A549 (cell line): ENCODE measurements at regions of chr12 and their contacts with region 1.

Region 1: GRCh38 chr12:51980051-51980808 is 26.5 kb upstream of the TAMALIN start:
- DNase-seq: peak; percentile 68 to 92
- ATAC-seq: peak; percentile 81 to 92
- H3K4me3 ChIP-seq: no peak overlapping the region
- H3K27ac ChIP-seq: no peak overlapping the region
- H3K4me1 ChIP-seq: peaks cover 25% of the 10 kb centered on the region
- CTCF ChIP-seq: peak; percentile 97
- EP300 ChIP-seq: no peak
- POLR2A ChIP-seq: no peak
- RAD21 ChIP-seq: peak; percentile 85 to 90

Region 2: DNA sequence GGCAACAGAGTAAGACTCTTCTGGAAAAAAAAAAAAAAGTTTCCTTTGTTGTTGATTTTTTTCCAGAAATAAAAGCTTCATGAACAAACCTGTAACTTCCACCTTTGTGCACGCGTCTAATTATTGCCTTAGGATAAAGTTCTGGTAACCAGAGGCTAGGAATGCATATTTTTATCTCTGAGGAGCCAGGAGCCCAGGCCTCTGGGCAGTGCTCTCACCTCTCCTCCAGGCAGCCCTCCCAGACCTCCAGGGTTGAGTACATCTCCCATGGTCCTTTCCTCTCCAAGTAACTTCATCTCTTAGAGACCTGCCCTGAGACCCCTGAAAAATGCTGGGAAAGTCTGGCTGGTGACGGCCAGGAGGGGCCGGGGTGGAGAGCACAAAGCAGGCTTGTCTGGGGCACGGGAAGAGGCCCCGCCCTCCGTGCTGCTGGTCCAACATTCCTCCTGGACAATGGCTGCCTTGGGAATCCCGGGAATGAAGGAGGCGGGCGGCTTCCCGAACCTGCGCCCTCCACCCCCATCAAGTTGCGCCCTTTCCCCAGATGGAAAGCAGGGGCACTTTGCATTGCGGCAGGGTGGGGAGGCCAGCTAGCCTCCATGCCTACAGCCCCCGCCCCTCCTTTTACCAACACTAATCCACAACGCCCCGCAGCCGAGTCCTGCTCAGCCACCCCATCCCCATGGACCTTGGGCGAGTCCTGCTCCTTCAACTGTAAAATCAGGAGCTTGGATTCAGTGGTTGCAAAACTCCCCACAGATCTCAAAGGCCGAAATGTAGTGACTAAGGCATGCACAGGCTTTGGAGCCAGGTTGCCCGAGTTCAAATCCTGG is 124.4 kb before region 1 on chr12:
- CTCF ChIA-PET with region 1: no interaction called
- POLR2A ChIA-PET with region 1: no interaction called
- DNase-seq: peak in 1 of 2 experiments; percentile 28
- ATAC-seq: peak; percentile 26 to 71; a peak in 4 of 6 replicates
- H3K4me3 ChIP-seq: no peak overlapping the region
- H3K27ac ChIP-seq: no peak overlapping the region
- H3K4me1 ChIP-seq: no peaks in the 10 kb centered on the region
- CTCF ChIP-seq: no peak
- EP300 ChIP-seq: no peak
- POLR2A ChIP-seq: no peak
- RAD21 ChIP-seq: no peak

Region 3: GRCh38 chr12:51891843-51892242 is 88.4 kb before region 1 on chr12:
- CTCF ChIA-PET with region 1: interaction called, 21 read pairs
- POLR2A ChIA-PET with region 1: no interaction called
- DNase-seq: peak in 1 of 2 experiments; percentile 39
- ATAC-seq: no peak
- H3K4me3 ChIP-seq: no peak overlapping the region
- H3K27ac ChIP-seq: no peak overlapping the region
- H3K4me1 ChIP-seq: no peaks in the 10 kb centered on the region
- CTCF ChIP-seq: peak; percentile 33; the same call in 2 of the 3 replicates
- EP300 ChIP-seq: no peak
- POLR2A ChIP-seq: no peak
- RAD21 ChIP-seq: peak; percentile 43 to 50

Region 4: GRCh38 chr12:51898937-51899336 is 81.3 kb before region 1 on chr12:
- CTCF ChIA-PET with region 1: interaction called, 21 read pairs
- POLR2A ChIA-PET with region 1: no interaction called
- DNase-seq: no peak
- ATAC-seq: no peak
- H3K4me3 ChIP-seq: no peak overlapping the region
- H3K27ac ChIP-seq: no peak overlapping the region
- H3K4me1 ChIP-seq: no peaks in the 10 kb centered on the region
- CTCF ChIP-seq: no peak
- EP300 ChIP-seq: no peak
- POLR2A ChIP-seq: no peak
- RAD21 ChIP-seq: no peak

Region 5: DNA sequence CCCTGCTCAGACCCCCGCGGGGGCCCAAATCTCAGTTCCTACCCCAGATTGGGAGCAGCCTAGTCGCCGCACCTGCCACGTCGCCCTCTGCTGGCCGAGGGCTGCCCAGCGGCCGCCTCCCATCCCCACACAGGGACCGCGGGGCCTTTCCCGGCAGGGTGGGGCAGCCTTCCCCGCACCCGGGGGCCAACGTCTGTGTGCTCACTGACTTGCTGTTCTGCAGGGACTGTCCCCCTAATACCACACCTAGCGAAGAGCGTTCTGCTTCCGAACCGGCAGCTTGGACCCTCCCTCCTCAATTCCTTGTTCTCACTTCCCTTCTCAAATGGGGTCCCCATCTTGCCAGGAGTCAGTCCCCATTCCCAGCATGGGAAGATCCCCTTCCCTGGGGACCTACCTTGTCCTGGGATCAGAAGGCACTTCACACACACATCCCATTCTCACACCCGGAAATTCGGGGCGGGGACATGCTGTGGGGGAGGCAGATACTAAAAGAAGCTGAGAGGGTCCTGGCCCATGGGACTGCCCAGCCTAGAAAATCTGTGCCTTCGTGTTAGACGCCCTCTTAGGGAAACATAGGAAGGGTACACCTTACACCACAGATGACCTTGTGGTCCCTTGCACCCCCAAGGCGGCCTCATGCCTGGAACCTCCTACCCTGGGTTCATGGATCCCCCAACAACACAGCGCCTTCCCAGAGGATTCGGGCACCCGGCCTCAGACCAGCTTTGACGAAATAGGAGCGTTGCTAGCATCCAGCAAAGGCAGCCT is 56.5 kb before region 1 on chr12:
- CTCF ChIA-PET with region 1: interaction called, 10 read pairs
- POLR2A ChIA-PET with region 1: no interaction called
- DNase-seq: peak in 1 of 2 experiments; percentile 49
- ATAC-seq: peak; percentile 75 to 93; a peak in 4 of 6 replicates
- H3K4me3 ChIP-seq: no peak overlapping the region
- H3K27ac ChIP-seq: peak overlapping the region in 1 of 2 experiments; percentile 58; a peak in 2 of 6 replicates
- H3K4me1 ChIP-seq: peaks cover 7% of the 10 kb centered on the region; the same call in 2 of the 3 replicates
- CTCF ChIP-seq: peak; percentile 80
- EP300 ChIP-seq: no peak
- POLR2A ChIP-seq: no peak
- RAD21 ChIP-seq: peak; percentile 31 to 34; a peak in 3 of 5 replicates

Region 6: DNA sequence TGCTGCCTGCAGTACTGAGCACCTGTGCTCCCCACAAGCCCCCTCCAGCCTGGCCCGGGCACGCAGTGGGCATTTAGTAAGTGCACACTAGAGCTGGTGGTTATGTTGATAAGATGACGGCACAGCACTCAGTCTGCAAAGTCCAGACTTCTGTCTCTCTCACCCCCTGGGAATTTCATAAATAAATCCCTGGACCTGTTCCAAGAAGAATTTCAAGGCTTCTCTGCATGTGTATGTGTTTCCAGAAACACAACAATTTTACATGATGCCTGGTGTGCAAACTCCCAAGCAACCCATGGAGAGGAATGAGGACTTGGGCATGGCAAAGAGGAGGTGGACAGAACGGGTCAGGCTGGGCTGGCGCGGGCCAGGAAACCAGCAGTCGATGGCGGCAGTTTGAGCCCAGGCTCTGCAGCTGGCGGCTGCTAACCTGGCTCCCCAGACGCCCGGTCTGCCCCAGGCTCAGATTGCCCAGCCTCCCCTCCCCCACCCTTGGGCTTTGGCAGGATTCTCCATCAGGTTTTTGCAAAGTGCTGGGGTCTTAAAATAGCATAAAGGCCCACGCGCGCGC is 39.1 kb before region 1 on chr12:
- CTCF ChIA-PET with region 1: interaction called, 11 read pairs
- POLR2A ChIA-PET with region 1: no interaction called
- DNase-seq: no peak
- ATAC-seq: no peak
- H3K4me3 ChIP-seq: no peak overlapping the region
- H3K27ac ChIP-seq: no peak overlapping the region
- H3K4me1 ChIP-seq: no peaks in the 10 kb centered on the region
- CTCF ChIP-seq: no peak
- EP300 ChIP-seq: no peak
- POLR2A ChIP-seq: no peak
- RAD21 ChIP-seq: no peak

Region 7: DNA sequence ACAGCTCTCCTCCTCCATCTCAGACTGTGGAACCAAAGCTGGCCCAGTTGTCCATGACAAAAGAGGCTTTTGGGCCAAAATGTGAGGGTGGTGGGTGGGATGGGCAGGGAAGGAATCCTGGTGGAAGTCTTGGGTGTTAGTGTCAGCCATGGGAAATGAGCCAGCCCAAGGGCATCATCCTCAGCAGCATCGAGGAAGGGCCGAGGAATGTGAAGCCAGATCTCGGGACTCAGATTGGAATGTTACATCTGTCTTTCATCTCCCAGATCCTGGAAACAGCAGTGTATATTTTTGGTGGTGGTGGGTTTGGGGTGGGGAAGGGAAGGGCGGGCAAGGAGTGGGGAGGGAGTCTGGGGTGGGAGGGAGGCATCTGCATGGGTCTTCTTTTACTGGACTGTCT is 14.7 kb after region 1 on chr12:
- CTCF ChIA-PET with region 1: interaction called, 111 read pairs
- POLR2A ChIA-PET with region 1: no interaction called
- DNase-seq: no peak
- ATAC-seq: no peak
- H3K4me3 ChIP-seq: no peak overlapping the region
- H3K27ac ChIP-seq: no peak overlapping the region
- H3K4me1 ChIP-seq: peaks cover 4% of the 10 kb centered on the region; the same call in 2 of the 3 replicates
- CTCF ChIP-seq: no peak
- EP300 ChIP-seq: no peak
- POLR2A ChIP-seq: no peak
- RAD21 ChIP-seq: no peak

Region 8: GRCh38 chr12:52032804-52033502 is 52.7 kb after region 1 on chr12:
- CTCF ChIA-PET with region 1: interaction called, 1,544 read pairs
- POLR2A ChIA-PET with region 1: no interaction called
- DNase-seq: peak; percentile 97
- ATAC-seq: peak; percentile 93 to 94
- H3K4me3 ChIP-seq: peak overlapping the region; percentile 32
- H3K27ac ChIP-seq: peak overlapping the region; percentile 65 to 77
- H3K4me1 ChIP-seq: peaks cover 28% of the 10 kb centered on the region
- CTCF ChIP-seq: no peak
- EP300 ChIP-seq: no peak
- POLR2A ChIP-seq: 0 out of 2 replicates have a peak, but pooled peaks have one; percentile 11
- RAD21 ChIP-seq: no peak